ENCODE measurements at regions of chr3 and their contacts with region 1.

Region 1: DNA sequence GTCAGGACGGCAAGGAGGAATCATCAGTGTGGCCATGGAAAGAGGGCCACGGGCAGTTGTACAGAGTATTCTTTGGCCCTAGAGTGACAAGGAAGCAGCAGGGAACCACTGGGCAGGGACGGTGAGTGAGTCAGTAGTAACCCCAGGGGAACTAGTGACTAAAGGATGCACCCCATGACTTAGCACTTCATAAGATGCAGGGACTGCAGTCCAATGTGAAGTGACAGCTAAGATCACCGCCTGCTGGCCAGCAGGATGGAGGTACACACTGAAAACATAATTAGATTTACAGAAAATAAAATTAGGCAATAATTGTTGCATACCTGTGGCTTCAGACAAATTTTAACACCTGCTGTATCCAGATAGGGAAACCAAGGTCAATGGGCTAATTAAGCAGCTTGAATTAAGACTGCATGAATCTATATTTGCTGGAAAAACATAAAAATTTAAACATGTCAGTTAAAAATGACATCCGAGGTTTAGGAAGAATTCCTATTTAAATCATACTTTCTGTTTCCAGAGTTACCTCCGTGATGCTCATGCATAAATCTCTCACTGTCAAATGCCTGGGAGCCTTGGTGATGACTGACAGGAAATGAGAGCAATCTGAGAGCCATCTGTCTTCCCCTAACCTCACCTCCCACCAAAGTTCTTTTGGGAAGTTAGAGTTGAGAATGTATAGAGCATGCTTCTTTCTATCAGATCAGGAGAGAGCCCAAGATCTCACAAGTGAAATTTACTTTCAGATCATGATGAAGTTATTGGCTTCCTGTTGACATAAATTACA is 56.5 kb downstream of the DCLK3 start:
- DNase-seq: no peak
- H3K4me3 ChIP-seq: no peak overlapping the region
- H3K27me3 ChIP-seq: no peaks in the 10 kb centered on the region
- CTCF ChIP-seq: peak; percentile 42

Region 2: DNA sequence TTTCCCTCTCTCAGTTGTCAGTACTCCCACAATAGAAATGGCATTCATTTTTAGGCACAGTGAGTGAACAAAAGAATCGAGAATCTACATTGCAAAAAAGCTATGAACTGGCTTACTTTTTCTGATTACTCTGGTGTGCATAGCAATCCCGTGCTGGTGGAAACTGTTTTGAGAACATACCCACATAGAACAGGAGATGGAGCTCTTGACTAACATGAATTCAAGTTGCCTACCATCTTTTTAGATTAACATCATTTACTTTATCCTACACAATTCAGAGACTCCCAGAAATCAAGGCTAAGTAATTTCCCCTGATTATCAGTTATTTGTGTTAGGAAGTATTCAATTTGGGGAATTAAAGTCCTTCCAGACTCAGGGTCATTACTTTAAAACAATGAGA is 741.9 kb before region 1 on chr3:
- CTCF ChIA-PET with region 1: interaction called, 13 read pairs
- POLR2A ChIA-PET with region 1: no interaction called
- DNase-seq: no peak
- H3K4me3 ChIP-seq: no peak overlapping the region
- H3K27me3 ChIP-seq: no peaks in the 10 kb centered on the region
- CTCF ChIP-seq: peak; percentile 58